MCF 10A (cell line): ENCODE measurements at regions of chr18 and their contacts with region 1.

Region 1: GRCh38 chr18:78984941-78985784 is 5.5 kb downstream of the SALL3 start:
- DNase-seq: peak; percentile 31
- H3K4me3 Mint-ChIP-seq: no peak overlapping the region
- H3K27ac Mint-ChIP-seq: no peak overlapping the region
- H3K4me1 Mint-ChIP-seq: no peaks in the 10 kb centered on the region
- H3K27me3 Mint-ChIP-seq: no peaks in the 10 kb centered on the region
- CTCF ChIP-seq: peak; percentile 37

Region 2: DNA sequence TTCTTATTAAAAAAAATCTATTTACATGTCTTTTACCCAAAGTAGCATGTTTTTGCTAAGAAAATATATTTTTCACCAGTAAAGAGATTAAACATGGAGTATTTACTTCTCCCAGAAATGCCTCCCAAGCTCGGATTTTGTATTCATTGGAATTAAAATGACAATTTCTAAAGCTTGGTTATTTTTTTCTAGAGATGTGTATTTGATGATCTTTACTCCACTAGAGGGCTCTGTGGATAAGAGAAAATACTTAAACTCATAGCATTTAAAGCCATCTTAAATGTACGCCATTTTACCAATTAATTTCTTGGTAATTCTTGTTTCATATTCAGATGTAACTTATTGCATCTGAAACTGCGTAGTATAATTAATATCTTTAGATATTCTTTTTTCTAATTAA is 1274.1 kb before region 1 on chr18:
- CTCF ChIA-PET with region 1: interaction called, 5 read pairs
- POLR2A ChIA-PET with region 1: no interaction called
- intact Hi-C with region 1: loop called (anchors 2 kb)
- DNase-seq: peak; percentile 6
- H3K4me3 Mint-ChIP-seq: no peak overlapping the region
- H3K27ac Mint-ChIP-seq: no peak overlapping the region
- H3K4me1 Mint-ChIP-seq: no peaks in the 10 kb centered on the region
- H3K27me3 Mint-ChIP-seq: peaks cover 44% of the 10 kb centered on the region
- CTCF ChIP-seq: peak; percentile 32

Region 3: GRCh38 chr18:78073275-78073674 is 911.9 kb before region 1 on chr18:
- CTCF ChIA-PET with region 1: interaction called, 18 read pairs
- POLR2A ChIA-PET with region 1: interaction called, 3 read pairs
- intact Hi-C with region 1: no loop called
- DNase-seq: no peak
- H3K4me3 Mint-ChIP-seq: no peak overlapping the region
- H3K27ac Mint-ChIP-seq: no peak overlapping the region
- H3K4me1 Mint-ChIP-seq: no peaks in the 10 kb centered on the region
- H3K27me3 Mint-ChIP-seq: no peaks in the 10 kb centered on the region
- CTCF ChIP-seq: no peak

Region 4: DNA sequence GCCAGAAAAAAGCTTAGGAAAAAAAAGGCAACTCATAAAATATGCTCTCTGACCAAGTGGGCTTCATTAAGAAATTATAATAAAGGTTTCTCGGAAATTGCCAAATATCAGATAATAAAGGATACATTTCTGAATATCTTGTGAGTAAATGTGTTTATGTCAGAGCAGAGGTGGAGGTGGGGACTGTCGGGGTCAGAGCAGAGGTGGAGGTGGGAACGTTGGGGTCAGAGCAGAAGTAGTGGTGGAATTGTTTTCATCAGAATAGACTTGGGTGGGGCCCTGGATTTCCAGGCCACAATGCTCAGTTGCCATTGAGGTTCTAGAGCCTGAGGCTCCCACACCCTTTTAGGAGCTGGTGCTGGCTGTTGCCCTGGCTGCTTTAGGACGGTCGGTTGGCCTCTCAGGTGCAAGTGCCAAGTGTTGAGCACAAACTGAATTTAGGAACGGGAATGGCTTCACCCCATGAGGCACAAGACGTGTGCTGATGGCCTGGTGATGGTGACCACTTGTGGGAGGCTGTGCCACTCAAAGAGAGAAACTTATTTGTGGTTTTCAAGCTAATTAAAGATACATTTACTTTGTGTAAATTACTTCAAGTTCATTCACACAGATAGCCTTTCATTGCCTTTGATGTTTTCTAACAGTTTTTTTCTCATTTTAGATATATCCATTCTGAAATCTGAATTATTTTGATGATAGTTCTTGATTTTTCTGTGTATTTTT is 215.5 kb after region 1 on chr18:
- CTCF ChIA-PET with region 1: no interaction called
- POLR2A ChIA-PET with region 1: no interaction called
- intact Hi-C with region 1: loop called (anchors 5 kb)
- DNase-seq: peak; percentile 2
- H3K4me3 Mint-ChIP-seq: no peak overlapping the region
- H3K27ac Mint-ChIP-seq: no peak overlapping the region
- H3K4me1 Mint-ChIP-seq: peaks cover 8% of the 10 kb centered on the region
- H3K27me3 Mint-ChIP-seq: no peaks in the 10 kb centered on the region
- CTCF ChIP-seq: no peak